ENCODE measurements at regions of chr14 and their contacts with region 1.

Region 1: GRCh38 chr14:80941241-80942182 is at the start of gene CEP128:
- DNase-seq: peak; percentile 84
- ATAC-seq: peak; percentile 94
- H3K4me3 Mint-ChIP-seq: peak within 1 kb of the TSS; percentile 94
- H3K27ac Mint-ChIP-seq: peak within 1 kb of the TSS; percentile 82
- H3K4me1 Mint-ChIP-seq: peaks cover 22% of the 10 kb centered on the region
- H3K27me3 Mint-ChIP-seq: no peaks in the 10 kb centered on the region
- total RNA-seq, gene CEP128: 30.0 to 32.9 TPM

Region 2: DNA sequence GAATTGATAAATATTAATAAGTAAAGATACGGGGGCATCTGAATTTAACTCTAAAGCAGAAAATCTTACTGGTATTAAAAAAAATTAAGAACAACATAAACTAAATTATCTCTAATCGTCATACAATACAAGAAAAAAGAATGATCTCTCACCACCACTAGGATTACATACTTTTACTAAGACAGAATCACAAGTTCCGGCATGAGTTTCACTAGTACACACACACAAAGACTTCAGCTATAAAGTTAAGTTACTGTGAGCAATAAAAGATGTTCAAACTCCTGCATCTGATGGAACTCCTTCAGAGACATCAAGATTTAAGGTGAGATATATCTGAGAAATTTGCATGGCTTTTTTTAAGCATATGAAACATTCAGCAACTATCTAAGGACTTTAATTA is 21.9 kb before region 1 on chr14:
- POLR2A ChIA-PET with region 1: no interaction called
- DNase-seq: no peak
- ATAC-seq: no peak
- H3K4me3 Mint-ChIP-seq: no peak overlapping the region
- H3K27ac Mint-ChIP-seq: no peak overlapping the region
- H3K4me1 Mint-ChIP-seq: peaks cover 7% of the 10 kb centered on the region
- H3K27me3 Mint-ChIP-seq: no peaks in the 10 kb centered on the region

Region 3: DNA sequence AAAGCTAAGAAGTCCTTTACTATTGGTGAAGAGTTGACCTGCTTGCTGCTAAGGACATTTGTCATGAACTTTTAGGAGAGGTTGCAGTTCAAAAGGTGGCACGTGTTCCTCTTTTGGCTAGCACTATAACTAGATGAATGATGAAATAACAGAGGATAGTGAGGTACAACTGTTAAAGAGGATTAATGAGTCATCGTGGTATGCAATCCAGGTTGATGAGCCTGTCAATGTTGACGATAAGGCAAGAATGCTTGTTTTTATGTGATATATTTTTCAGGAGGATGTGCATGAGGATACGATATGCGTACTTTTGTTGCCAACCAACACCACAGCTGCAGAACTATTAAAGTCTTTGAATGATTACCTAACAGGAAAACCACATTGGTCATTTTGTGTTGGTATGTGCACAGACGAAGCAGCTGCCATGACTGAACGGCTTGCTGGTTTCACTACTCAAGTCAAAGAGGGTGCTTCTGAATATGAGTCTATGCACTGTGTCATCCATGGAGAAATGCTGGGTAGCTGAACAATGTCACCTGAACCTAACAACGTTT is 10.6 kb before region 1 on chr14:
- POLR2A ChIA-PET with region 1: interaction called, 25 read pairs
- DNase-seq: no peak
- ATAC-seq: peak; percentile 97
- H3K4me3 Mint-ChIP-seq: peak overlapping the region; percentile 64
- H3K27ac Mint-ChIP-seq: peak overlapping the region; percentile 87
- H3K4me1 Mint-ChIP-seq: peaks cover 56% of the 10 kb centered on the region
- H3K27me3 Mint-ChIP-seq: no peaks in the 10 kb centered on the region

Region 4: DNA sequence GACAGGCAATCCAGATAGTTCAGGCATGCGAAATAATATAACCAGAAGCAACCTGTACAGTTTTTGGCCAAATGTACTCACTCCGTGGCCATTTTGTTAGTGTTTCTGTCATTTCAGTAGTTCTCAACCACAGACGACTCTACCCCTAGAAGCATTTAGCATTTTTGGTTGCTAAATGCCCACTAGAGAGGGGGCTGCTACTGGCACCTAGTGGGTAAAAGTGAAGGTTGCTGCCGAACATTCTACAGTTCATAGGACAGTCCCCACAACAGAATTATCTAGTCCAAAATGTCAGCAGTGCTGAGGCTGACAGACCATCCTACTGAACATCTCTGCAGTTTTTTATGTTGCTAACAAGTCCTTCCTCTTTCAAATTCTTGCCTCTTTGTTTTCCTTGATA is 121.3 kb after region 1 on chr14:
- POLR2A ChIA-PET with region 1: no interaction called
- DNase-seq: no peak
- ATAC-seq: peak; percentile 50
- H3K4me3 Mint-ChIP-seq: no peak overlapping the region
- H3K27ac Mint-ChIP-seq: no peak overlapping the region
- H3K4me1 Mint-ChIP-seq: no peaks in the 10 kb centered on the region
- H3K27me3 Mint-ChIP-seq: peaks cover 2% of the 10 kb centered on the region